Endothelial cell of umbilical vein (primary cell): ENCODE measurements at regions of chr12 and their contacts with region 1.

Region 1: GRCh38 chr12:106986625-106987430 is at the start of gene MTERF2:
- DNase-seq: peak; percentile 97
- H3K4me3 ChIP-seq: peak within 1 kb of the TSS; percentile 62 to 79 (median 78)
- H3K27ac ChIP-seq: peak within 1 kb of the TSS; percentile 68
- H3K4me1 ChIP-seq: peaks cover 16% of the 10 kb centered on the region
- H3K27me3 ChIP-seq: no peaks in the 10 kb centered on the region
- CTCF ChIP-seq: no peak
- POLR2A ChIP-seq: peak; percentile 54
- total RNA-seq, gene MTERF2: 6.7 and 9.6 TPM in 2 replicates

Region 2: DNA sequence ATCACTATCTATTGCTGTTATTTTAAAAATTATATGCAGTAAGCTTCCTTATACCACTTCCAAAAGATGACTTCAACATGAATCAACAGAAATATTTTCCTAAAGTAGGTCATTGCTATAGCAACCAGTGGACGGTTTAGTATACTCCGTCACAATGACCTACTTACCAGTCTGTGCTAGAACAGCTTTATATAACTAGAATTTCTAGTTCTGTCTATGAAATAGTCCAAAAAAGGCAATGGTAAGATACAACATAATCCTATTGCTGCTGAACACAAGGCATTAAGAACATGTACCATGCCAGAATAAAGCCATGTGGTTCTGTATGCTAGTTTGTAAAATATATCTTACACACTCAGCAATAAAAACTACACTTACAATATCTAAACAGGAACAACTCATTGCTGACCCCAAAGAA is 40.8 kb after region 1 on chr12:
- CTCF ChIA-PET with region 1: no interaction called
- POLR2A ChIA-PET with region 1: no interaction called
- dilution Hi-C with region 1: no loop called
- intact Hi-C with region 1: loop called (anchors 1 kb)
- DNase-seq: peak; percentile 95
- H3K4me3 ChIP-seq: no peak overlapping the region
- H3K27ac ChIP-seq: peak overlapping the region; percentile 81
- H3K4me1 ChIP-seq: peaks cover 17% of the 10 kb centered on the region
- H3K27me3 ChIP-seq: no peaks in the 10 kb centered on the region
- CTCF ChIP-seq: no peak
- POLR2A ChIP-seq: no peak

Region 3: GRCh38 chr12:107057071-107057818 is 70.4 kb after region 1 on chr12:
- CTCF ChIA-PET with region 1: interaction called, 3 read pairs
- POLR2A ChIA-PET with region 1: no interaction called
- dilution Hi-C with region 1: no loop called
- intact Hi-C with region 1: loop called (anchors 2 kb)
- DNase-seq: peak; percentile 80
- H3K4me3 ChIP-seq: peak overlapping the region in 1 of 3 experiments; percentile 47
- H3K27ac ChIP-seq: peak overlapping the region; percentile 51
- H3K4me1 ChIP-seq: peaks cover 16% of the 10 kb centered on the region
- H3K27me3 ChIP-seq: no peaks in the 10 kb centered on the region
- CTCF ChIP-seq: no peak
- POLR2A ChIP-seq: no peak